Naive thymus-derived CD8-positive, alpha-beta T cell (primary cell): ENCODE measurements at regions of chr1 and their contacts with region 1.

Region 1: DNA sequence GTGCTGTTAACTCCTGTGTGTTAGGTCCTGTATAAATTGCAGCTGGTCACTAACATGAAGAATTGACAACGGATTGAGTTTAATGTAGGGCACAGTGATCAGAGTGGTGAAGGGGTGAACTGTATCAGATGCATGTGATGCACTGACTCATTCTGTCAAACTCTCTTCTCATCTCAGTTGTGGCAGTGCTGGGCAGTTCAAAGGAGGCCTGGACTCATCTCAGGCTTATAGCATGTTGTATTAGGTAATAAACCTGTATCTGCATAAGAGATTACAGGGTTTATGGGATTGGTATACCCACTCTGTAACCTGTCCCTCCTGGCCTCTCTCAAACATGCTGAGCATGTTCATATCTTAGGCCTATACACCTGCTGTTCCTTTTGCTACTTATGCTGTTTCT is 12.4 kb upstream of the GBP3 start:
- DNase-seq: no peak
- ATAC-seq: no peak
- H3K4me3 Mint-ChIP-seq: peak overlapping the region in 5 of 10 donors; percentile 2 to 51 (median 25)
- H3K27ac Mint-ChIP-seq: peak overlapping the region in 9 of 10 donors; percentile 64 to 94 (median 85)
- H3K4me1 Mint-ChIP-seq: peaks cover 30 to 52% (median 47%) of the 10 kb centered on the region in 4 donors
- H3K27me3 Mint-ChIP-seq: no peaks in the 10 kb centered on the region

Region 2: DNA sequence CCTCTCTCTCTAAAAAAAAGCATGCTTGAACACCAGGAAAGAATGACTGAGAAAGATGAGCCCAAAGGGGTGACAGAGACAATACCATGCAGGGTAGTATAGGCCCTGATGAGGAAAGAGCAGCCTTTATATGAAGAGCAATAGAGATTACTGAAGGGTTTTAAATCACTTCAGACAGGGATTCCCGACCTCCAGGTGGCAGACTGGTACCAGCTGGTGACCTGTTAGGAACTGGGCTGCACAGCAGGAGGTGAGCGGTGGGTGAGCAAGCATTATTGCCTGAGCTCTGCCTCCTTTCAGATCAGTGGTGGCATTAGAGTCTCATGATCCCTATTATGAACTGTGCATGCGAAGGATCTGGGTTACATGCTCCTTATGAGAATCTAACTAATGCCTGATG is 112.9 kb before region 1 on chr1:
- POLR2A ChIA-PET with region 1: no interaction called
- DNase-seq: no peak
- ATAC-seq: no peak
- H3K4me3 Mint-ChIP-seq: no peak overlapping the region
- H3K27ac Mint-ChIP-seq: no peak overlapping the region
- H3K4me1 Mint-ChIP-seq: no peaks in the 10 kb centered on the region
- H3K27me3 Mint-ChIP-seq: no peaks in the 10 kb centered on the region

Region 3: DNA sequence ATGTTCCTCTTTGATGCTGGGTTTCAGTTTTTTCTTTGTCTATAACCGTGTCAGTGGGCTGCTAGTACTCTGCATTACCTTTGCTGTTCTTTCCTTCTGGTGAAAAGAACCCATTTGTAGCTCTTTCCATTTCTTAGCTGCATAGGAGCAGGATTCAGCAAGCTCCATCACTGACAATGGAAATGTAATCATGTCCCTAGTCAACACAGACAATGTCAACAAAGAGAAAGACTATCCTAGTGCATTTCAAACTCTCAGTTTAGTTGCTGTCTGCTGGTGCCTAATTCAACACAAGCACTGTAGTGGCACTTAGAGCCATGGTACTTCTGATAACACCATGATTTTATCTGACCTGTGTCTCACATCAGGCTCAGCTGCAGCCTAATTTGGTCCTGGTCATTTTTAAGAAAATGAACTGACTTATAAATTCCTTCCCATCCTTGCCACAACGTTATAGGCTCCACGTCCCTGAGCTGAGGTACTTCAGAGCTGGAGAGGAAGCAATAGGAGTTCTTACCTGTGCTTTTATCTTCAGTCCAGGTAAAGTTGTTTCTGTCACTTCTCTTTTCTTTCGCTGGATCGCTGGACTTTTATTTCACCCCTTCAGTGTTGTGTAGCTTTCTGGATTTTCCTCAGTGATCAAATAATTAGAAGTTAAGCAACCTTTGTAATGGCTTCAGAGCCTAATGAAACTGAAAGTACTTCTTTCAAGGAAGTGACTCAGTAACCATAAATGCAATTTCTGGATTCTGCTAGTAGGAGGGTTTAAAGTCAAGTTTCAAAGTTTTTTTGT is 12.7 kb before region 1 on chr1 and contains the start of gene GBP3:
- POLR2A ChIA-PET with region 1: interaction called, 33 read pairs
- DNase-seq: peak in 4 of 10 donors; percentile 3 to 52 (median 40)
- ATAC-seq: peak; percentile 80 to 81
- H3K4me3 Mint-ChIP-seq: peak within 1 kb of the TSS; percentile 86 to 98 (median 94)
- H3K27ac Mint-ChIP-seq: peak within 1 kb of the TSS; percentile 92 to 98 (median 96)
- H3K4me1 Mint-ChIP-seq: peaks cover 30 to 48% (median 43%) of the 10 kb centered on the region in 4 donors
- H3K27me3 Mint-ChIP-seq: no peaks in the 10 kb centered on the region
- polyA plus RNA-seq, gene GBP3: 7.7 to 10.4 (median 9.4) TPM

Region 4: GRCh38 chr1:89065079-89065868 is 30.2 kb after region 1 on chr1 and contains the start of gene GBP1:
- POLR2A ChIA-PET with region 1: interaction called, 15 read pairs
- DNase-seq: peak in 4 of 10 donors; percentile 9 to 56 (median 53)
- ATAC-seq: peak; percentile 85 to 87
- H3K4me3 Mint-ChIP-seq: peak within 1 kb of the TSS; percentile 87 to 100 (median 94)
- H3K27ac Mint-ChIP-seq: peak within 1 kb of the TSS; percentile 87 to 99 (median 96)
- H3K4me1 Mint-ChIP-seq: peaks cover 28 to 62% (median 58%) of the 10 kb centered on the region in 4 donors
- H3K27me3 Mint-ChIP-seq: no peaks in the 10 kb centered on the region
- polyA plus RNA-seq, gene GBP1: 41.1 to 60.5 (median 44.7) TPM

Region 5: GRCh38 chr1:89286549-89287180 is 251.6 kb after region 1 on chr1:
- POLR2A ChIA-PET with region 1: no interaction called
- DNase-seq: peak in 2 of 10 donors; percentile 45 to 58
- ATAC-seq: peak; percentile 74 to 78
- H3K4me3 Mint-ChIP-seq: peak overlapping the region; percentile 25 to 82 (median 80)
- H3K27ac Mint-ChIP-seq: peak overlapping the region; percentile 77 to 97 (median 85)
- H3K4me1 Mint-ChIP-seq: peaks cover 27 to 73% (median 67%) of the 10 kb centered on the region in 4 donors
- H3K27me3 Mint-ChIP-seq: no peaks in the 10 kb centered on the region